Activated T-helper 1 cell treated with anti-CD3 and anti-CD28 coated beads, Interleukin-12 subunit alpha, Interleukin-12 subunit beta, Interleukin-2, Interleukin-4 antibody, amounts not matched to agents 30 ng/mL and 10 ng/mL and 1 ng/mL, durations not matched to agents 14 hours and 24 hours and 36 hours (primary cell): ENCODE measurements at regions of chr6 and their contacts with region 1.

Region 1: GRCh38 chr6:133512410-133513016 is 271.4 kb downstream of the EYA4 start:
- DNase-seq: no peak
- H3K4me3 Mint-ChIP-seq: no peak overlapping the region
- H3K27ac Mint-ChIP-seq: no peak overlapping the region
- H3K4me1 Mint-ChIP-seq: no peaks in the 10 kb centered on the region
- H3K27me3 Mint-ChIP-seq: no peaks in the 10 kb centered on the region

Region 2: DNA sequence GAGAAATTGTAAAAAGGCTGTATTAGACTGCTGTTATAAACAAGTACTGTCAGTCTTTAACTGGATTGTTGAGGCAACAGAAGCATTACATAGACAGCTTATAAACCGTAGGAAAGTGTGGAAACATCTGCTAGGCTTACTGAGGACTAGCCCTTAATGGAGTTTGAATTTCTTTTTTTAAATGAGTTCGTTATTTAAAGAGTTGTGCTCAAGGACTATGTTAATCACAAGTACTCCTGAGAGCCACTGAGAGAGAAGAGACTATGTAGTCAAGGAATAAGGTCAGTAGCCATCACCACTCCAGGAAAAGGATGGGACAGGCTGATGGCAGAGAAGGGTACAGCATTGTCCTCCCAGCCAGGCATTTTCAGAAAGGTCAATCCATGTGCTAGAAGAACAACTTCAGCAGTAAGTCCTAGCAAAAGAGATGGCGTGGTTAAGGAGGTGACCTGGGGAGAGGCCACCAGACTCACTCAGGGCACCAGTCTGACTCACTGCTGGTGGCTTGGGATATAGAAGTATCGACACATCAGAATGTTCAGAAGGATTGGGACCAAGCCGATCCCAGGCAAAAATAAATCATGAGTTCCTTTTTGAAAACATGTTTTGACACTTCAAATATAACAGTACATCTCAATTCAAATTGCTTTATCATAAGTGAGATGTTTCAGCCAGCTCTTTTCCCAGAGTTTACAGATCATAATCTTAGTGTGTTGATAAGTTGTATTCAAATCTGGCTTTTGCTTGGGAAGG is 691.7 kb before region 1 on chr6:
- intact Hi-C with region 1: loop called (anchors 5 kb)
- DNase-seq: no peak
- H3K4me3 Mint-ChIP-seq: no peak overlapping the region
- H3K27ac Mint-ChIP-seq: no peak overlapping the region
- H3K4me1 Mint-ChIP-seq: peaks cover 44% of the 10 kb centered on the region
- H3K27me3 Mint-ChIP-seq: peaks cover 3% of the 10 kb centered on the region

Region 3: DNA sequence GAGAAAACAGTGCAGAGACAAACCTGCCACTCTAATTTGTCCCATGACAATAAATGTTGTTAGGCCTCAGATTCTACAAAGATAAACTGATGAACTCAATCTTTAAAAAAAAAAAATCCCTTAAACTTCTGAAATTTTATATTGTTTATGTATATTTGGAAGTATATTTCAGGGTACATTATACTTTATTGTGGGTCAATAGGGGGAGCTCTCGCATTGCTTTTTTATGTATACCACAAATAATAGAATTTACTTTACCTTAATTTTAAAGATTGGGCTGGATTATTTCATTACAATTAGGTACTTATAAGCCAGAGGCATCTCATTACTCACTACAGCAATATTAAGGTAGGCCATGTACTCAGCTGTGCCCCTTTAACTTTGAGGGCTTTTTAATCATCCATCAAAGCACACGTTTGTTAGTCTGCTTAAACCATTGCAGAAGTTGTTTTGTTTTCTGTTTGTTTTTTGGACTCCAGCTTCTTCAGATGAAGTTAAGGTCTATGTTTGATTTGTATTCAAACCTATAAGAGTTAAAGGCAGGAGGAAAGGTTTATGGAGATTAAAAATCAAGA is 327.6 kb before region 1 on chr6:
- intact Hi-C with region 1: loop called (anchors 5 kb)
- DNase-seq: no peak
- H3K4me3 Mint-ChIP-seq: no peak overlapping the region
- H3K27ac Mint-ChIP-seq: no peak overlapping the region
- H3K4me1 Mint-ChIP-seq: no peaks in the 10 kb centered on the region
- H3K27me3 Mint-ChIP-seq: peaks cover 1% of the 10 kb centered on the region

Region 4: GRCh38 chr6:133309579-133309978 is 202.9 kb before region 1 on chr6:
- intact Hi-C with region 1: no loop called
- DNase-seq: no peak
- H3K4me3 Mint-ChIP-seq: no peak overlapping the region
- H3K27ac Mint-ChIP-seq: no peak overlapping the region
- H3K4me1 Mint-ChIP-seq: no peaks in the 10 kb centered on the region
- H3K27me3 Mint-ChIP-seq: no peaks in the 10 kb centered on the region

Region 5: GRCh38 chr6:133487174-133487573 is 25.3 kb before region 1 on chr6:
- intact Hi-C with region 1: no loop called
- DNase-seq: no peak
- H3K4me3 Mint-ChIP-seq: no peak overlapping the region
- H3K27ac Mint-ChIP-seq: no peak overlapping the region
- H3K4me1 Mint-ChIP-seq: no peaks in the 10 kb centered on the region
- H3K27me3 Mint-ChIP-seq: peaks cover 1% of the 10 kb centered on the region

Region 6: GRCh38 chr6:134035823-134036296 is 523.3 kb after region 1 on chr6:
- intact Hi-C with region 1: no loop called
- DNase-seq: no peak
- H3K4me3 Mint-ChIP-seq: no peak overlapping the region
- H3K27ac Mint-ChIP-seq: no peak overlapping the region
- H3K4me1 Mint-ChIP-seq: peaks cover 15% of the 10 kb centered on the region
- H3K27me3 Mint-ChIP-seq: peaks cover 2% of the 10 kb centered on the region